CD4-positive, alpha-beta memory T cell (primary cell): ENCODE measurements at regions of chr6 and their contacts with region 1.

Region 1: GRCh38 chr6:11064836-11065235 is 20.7 kb upstream of the ELOVL2 start:
- DNase-seq: no peak
- H3K4me3 ChIP-seq: no peak overlapping the region
- H3K4me3 Mint-ChIP-seq: no peak overlapping the region
- H3K27ac ChIP-seq: no peak overlapping the region
- H3K27ac Mint-ChIP-seq: no peak overlapping the region
- H3K4me1 ChIP-seq: no peaks in the 10 kb centered on the region
- H3K4me1 Mint-ChIP-seq: no peaks in the 10 kb centered on the region
- H3K27me3 ChIP-seq: no peaks in the 10 kb centered on the region
- H3K27me3 Mint-ChIP-seq: peaks cover 7% of the 10 kb centered on the region in 2 donors

Region 2: DNA sequence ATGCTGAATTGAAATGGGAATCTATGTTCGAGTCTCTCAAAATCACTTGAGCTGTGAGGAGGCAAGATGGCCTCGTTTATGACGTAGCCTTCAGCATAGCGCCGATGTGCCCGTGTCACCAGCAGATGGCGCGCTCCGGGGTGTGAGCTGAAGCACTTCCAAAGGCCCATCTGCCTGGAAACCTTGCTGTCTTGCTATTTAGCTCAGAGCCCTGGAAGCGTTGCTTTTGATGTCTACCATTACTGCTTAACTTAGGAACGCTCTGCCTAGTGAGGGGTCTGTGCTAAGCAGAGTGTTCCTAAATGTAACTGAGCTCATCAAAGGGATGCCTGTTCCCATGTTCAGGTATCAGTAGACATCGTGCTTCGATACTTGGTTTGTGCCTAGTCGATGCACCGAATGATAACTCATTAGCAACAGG is 110.2 kb before region 1 on chr6:
- CTCF ChIA-PET with region 1: no interaction called
- POLR2A ChIA-PET with region 1: no interaction called
- intact Hi-C with region 1: loop called (anchors 2 kb)
- DNase-seq: peak; percentile 33 to 53 (median 39)
- H3K4me3 ChIP-seq: no peak overlapping the region
- H3K4me3 Mint-ChIP-seq: no peak overlapping the region
- H3K27ac ChIP-seq: no peak overlapping the region
- H3K27ac Mint-ChIP-seq: no peak overlapping the region
- H3K4me1 ChIP-seq: no peaks in the 10 kb centered on the region
- H3K4me1 Mint-ChIP-seq: peaks cover 0 to 4% (median 2%) of the 10 kb centered on the region in 4 donors
- H3K27me3 ChIP-seq: no peaks in the 10 kb centered on the region
- H3K27me3 Mint-ChIP-seq: peaks cover 5 to 16% of the 10 kb centered on the region in 2 donors

Region 3: GRCh38 chr6:11083491-11083890 is 18.7 kb after region 1 on chr6:
- CTCF ChIA-PET with region 1: interaction called, 10 read pairs
- POLR2A ChIA-PET with region 1: no interaction called
- intact Hi-C with region 1: no loop called
- DNase-seq: no peak
- H3K4me3 ChIP-seq: no peak overlapping the region
- H3K4me3 Mint-ChIP-seq: no peak overlapping the region
- H3K27ac ChIP-seq: no peak overlapping the region
- H3K27ac Mint-ChIP-seq: no peak overlapping the region
- H3K4me1 ChIP-seq: no peaks in the 10 kb centered on the region
- H3K4me1 Mint-ChIP-seq: no peaks in the 10 kb centered on the region
- H3K27me3 ChIP-seq: no peaks in the 10 kb centered on the region
- H3K27me3 Mint-ChIP-seq: peaks cover 2 to 6% of the 10 kb centered on the region in 2 donors